Mammary epithelial cell (primary cell): ENCODE measurements at regions of chr1 and their contacts with region 1.

Region 1: DNA sequence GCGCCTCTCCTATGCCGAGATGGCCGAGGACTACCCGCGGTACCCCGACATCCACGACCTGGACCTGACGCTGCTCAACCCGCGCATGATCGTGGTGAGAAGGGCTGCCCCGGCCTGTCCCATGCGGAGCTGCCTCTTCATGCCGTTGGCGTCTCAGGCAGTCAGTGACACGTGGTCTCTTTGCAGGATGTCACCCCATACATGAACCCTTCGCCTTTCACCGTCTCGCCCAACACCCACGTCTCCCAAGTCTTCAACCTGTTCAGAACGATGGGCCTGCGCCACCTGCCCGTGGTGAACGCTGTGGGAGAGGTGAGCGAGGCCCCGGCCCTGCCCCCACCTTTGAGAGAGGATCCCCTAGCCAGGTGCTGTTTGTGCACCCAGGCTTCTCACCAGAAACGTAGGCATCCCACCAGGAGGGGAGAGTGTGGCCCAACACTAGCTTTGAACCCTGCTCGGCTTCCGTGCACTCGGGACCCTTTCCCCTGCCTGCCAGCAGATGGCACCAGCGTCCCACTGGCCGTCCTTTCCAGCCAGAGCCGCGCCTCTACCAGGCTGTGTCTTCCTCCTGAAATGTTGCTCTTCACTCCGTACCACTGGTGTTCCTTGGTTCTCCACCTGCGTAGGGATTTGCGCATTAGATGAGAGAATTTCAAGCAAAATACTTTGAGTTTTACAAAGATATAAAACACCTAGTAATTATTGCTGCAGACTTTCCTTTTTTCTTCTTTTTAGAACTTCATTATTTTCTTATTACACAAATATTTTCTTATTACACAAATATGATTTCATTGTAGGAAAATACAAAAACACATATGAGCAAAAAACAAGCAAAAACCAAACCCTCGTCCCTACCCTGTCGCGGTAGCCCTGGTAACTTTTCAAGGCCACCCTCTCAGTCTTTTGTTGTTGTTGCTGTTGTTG is 9.0 kb downstream of the NPPA start:
- DNase-seq: peak; percentile 35
- H3K4me3 ChIP-seq: no peak overlapping the region
- H3K27ac ChIP-seq: no peak overlapping the region
- H3K4me1 ChIP-seq: no peaks in the 10 kb centered on the region
- H3K27me3 ChIP-seq: no peaks in the 10 kb centered on the region
- CTCF ChIP-seq: peak; percentile 98 to 100

Region 2: GRCh38 chr1:11893907-11894251 is 55.3 kb after region 1 on chr1:
- CTCF ChIA-PET with region 1: interaction called, 5 read pairs
- dilution Hi-C with region 1: no loop called
- in situ Hi-C with region 1: loop called in 1 of 2 experiments (anchors 5 kb)
- intact Hi-C with region 1: loop called (anchors 1 kb)
- DNase-seq: peak; percentile 42
- H3K4me3 ChIP-seq: no peak overlapping the region
- H3K27ac ChIP-seq: no peak overlapping the region
- H3K4me1 ChIP-seq: peaks cover 3% of the 10 kb centered on the region
- H3K27me3 ChIP-seq: peaks cover 7% of the 10 kb centered on the region
- CTCF ChIP-seq: peak; percentile 93 to 98

Region 3: DNA sequence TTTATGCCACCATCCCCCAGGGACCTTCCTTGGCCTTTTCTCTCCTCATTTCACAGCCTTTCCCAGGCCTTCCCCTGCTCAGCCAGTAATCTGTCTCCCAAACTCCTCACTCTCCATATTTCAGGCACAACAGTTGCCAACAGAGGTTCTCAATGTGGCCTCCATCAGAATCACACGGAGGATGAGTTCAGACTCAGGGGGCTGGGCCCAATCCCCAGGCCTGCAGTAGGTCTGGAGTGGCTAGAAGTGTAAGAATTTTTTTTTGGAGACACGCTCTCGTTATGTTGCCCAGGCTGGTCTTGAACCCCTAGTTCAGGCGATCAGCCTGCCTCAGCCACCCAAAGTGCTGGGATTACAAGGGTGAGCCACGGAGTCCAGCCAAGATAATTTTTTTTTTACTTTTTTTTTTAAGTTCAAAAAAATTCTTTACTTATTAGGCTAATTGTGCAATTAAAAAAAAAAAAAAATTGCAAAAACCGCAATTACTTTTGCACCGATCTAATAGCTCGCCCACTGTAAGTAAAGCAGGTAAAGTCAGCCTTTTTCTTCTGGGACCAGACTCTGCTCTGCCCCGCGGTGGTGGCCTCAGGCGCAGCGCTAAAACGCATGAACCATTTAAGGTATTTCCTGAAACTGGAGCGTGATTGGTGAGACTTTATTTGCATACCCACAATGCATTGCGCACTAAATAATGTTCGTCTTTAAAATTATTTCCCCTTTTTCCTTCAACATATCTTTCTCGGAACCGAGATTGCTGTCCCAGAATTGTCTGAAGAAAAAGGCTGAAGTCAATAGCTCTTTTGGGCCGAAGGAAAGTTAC is 68.9 kb after region 1 on chr1:
- CTCF ChIA-PET with region 1: interaction called, 3 read pairs
- dilution Hi-C with region 1: no loop called
- in situ Hi-C with region 1: loop called in 1 of 2 experiments (anchors 5 kb)
- intact Hi-C with region 1: loop called (anchors 1 kb)
- DNase-seq: peak; percentile 87
- H3K4me3 ChIP-seq: no peak overlapping the region
- H3K27ac ChIP-seq: peak overlapping the region; percentile 100
- H3K4me1 ChIP-seq: peaks cover 3% of the 10 kb centered on the region
- H3K27me3 ChIP-seq: no peaks in the 10 kb centered on the region
- CTCF ChIP-seq: peak; percentile 70 to 74

Region 4: GRCh38 chr1:11967028-11967547 is 128.5 kb after region 1 on chr1:
- CTCF ChIA-PET with region 1: no interaction called
- dilution Hi-C with region 1: no loop called
- in situ Hi-C with region 1: loop called in 1 of 2 experiments (anchors 10 kb)
- intact Hi-C with region 1: loop called (anchors 1 kb)
- DNase-seq: peak; percentile 48
- H3K4me3 ChIP-seq: no peak overlapping the region
- H3K27ac ChIP-seq: no peak overlapping the region
- H3K4me1 ChIP-seq: no peaks in the 10 kb centered on the region
- H3K27me3 ChIP-seq: no peaks in the 10 kb centered on the region
- CTCF ChIP-seq: peak; percentile 67 to 86

Region 5: GRCh38 chr1:12208764-12209494 is 370.3 kb after region 1 on chr1:
- CTCF ChIA-PET with region 1: no interaction called
- dilution Hi-C with region 1: no loop called
- in situ Hi-C with region 1: no loop called
- intact Hi-C with region 1: loop called (anchors 10 kb)
- DNase-seq: peak; percentile 57
- H3K4me3 ChIP-seq: no peak overlapping the region
- H3K27ac ChIP-seq: no peak overlapping the region
- H3K4me1 ChIP-seq: peaks cover 8% of the 10 kb centered on the region
- H3K27me3 ChIP-seq: no peaks in the 10 kb centered on the region
- CTCF ChIP-seq: peak; percentile 90 to 93